ENCODE measurements at regions of chr6 and their contacts with region 1.

Region 1: DNA sequence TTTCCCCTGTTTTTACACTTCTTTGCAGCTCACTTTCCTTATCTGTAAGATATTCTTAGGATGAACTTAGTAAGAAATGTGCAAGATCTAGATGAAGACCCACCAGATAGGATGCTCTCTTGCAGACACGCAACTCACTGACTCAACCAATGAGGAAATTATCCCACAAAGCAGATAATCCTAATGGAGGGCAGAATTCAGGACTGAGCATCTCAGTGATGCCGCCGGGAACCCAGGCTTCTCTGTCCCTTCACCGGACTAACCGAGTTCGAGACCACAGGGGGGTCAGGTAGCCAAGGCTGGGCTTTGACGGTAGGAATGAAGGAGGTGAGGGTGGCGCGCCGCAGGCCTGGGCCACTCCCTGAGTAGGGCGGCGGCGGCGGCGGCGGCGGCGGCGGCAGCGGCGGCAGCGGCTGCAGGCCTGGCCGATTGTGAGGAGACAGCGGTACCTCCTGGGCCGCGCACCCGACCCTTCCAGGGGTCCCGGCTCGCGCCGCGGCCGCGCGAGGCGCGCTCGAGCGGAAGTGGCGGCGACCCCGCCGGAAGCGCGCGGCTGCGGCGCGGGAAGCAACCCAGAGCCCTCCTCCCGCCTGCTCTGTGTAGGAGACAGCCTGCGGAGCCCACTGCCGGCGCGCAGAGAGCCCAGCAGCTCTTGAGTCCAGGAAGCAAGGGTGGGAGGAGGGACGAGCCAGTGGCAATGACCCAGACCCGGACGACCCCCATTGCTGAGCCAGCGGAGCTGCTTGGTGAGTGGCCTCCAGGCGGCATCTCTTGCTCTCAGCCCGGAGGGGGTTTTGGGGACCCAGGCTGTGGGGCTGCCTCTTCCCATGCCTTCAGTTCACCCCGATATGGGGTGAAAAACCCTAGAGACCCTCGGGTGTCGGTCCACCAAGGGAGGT is at the start of gene KHDC1:
- DNase-seq: peak; percentile 71
- H3K4me3 Mint-ChIP-seq: peak within 1 kb of the TSS; percentile 73
- H3K27ac Mint-ChIP-seq: peak within 1 kb of the TSS; percentile 34
- H3K4me1 Mint-ChIP-seq: peaks cover 25% of the 10 kb centered on the region
- H3K27me3 Mint-ChIP-seq: no peaks in the 10 kb centered on the region
- total RNA-seq, gene KHDC1: 4.0 to 4.6 TPM

Region 2: DNA sequence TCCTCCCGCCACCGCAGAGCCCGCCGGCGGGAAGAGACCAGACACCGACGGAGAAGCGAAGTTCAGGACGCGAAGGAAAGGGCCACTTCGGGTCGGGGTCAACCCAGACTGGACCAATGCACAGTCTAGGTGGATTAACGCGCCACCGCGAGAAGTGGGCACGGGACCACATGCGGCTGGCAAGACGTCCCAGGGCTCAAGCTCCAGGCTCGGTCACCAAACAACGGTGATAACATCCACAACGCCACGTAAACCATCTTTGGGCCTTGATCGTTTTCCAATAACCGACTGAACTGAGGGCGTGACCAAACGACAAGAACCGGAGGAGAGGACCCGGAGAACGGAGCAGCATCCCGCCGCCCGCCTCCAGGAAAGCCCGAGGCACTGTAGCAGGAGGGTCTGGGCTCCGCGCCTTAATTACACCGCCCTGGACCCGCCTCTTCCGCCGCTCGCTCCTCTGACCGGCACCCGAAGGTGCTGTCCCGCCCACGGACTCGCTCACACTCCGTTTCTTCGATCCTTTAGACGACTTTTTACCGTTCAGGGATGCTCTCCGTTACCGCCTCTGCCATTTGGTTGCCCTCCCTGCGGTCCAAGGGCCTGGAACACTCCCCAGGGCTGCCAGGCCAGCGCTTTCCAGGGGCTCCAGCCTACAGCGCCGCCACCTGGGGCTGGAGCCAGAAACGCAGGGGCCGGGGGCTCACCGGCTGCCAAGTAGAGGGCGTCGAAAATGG is 47.0 kb after region 1 on chr6:
- CTCF ChIA-PET with region 1: interaction called, 6 read pairs
- POLR2A ChIA-PET with region 1: interaction called, 3 read pairs
- intact Hi-C with region 1: loop called (anchors 1 kb)
- DNase-seq: peak; percentile 77
- H3K4me3 Mint-ChIP-seq: peak overlapping the region; percentile 91
- H3K27ac Mint-ChIP-seq: peak overlapping the region; percentile 77
- H3K4me1 Mint-ChIP-seq: peaks cover 19% of the 10 kb centered on the region
- H3K27me3 Mint-ChIP-seq: peaks cover 18% of the 10 kb centered on the region

Measured in activated CD4-positive, alpha-beta memory T cell treated with anti-CD3 and anti-CD28 coated beads for 36 hours (primary cell).